ENCODE measurements at regions of chr6 and their contacts with region 1.

Region 1: GRCh38 chr6:52664186-52664990 is 6.5 kb upstream of the TMEM14A start:
- DNase-seq: peak; percentile 58
- ATAC-seq: peak; percentile 91
- H3K4me3 Mint-ChIP-seq: no peak overlapping the region
- H3K27ac Mint-ChIP-seq: no peak overlapping the region
- H3K4me1 Mint-ChIP-seq: peaks cover 19% of the 10 kb centered on the region
- H3K27me3 Mint-ChIP-seq: no peaks in the 10 kb centered on the region
- CTCF ChIP-seq: no peak

Region 2: DNA sequence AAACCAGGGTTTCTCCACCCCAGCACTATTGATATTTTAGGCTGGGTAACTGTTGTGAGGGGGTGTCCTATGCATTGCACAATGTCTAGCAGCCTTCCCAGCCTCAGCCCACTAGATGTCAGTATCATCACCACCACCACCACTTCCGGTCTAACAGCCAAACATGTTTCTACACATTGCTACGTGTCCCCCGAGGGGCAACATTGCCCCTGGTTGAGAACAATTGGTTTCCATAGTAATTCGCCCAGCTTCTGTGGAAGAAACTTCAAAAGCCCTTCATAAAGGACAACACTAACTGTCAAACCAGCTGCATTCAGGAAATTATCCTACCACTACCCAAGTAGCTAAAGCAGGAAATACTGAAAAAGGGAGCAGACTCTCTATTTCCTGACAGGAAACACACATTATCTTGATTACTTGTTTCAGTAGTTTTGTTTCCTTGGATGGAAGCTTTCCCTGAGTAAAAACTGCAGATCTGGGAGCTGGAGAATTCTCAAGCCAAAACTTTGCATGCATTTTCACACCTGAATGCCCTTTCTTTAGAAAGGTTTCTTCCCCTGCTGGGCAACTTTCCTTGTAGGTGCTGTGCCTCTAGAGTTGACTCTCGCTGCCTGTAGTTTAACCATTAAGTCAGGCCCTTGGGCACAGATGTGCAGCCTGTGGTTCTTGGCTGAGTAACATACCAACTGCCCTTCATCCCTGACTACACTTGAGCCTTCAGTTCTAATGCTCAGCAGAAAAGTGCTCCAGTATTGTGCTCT is 600.6 kb before region 1 on chr6:
- CTCF ChIA-PET with region 1: no interaction called
- POLR2A ChIA-PET with region 1: no interaction called
- intact Hi-C with region 1: loop called (anchors 1 kb)
- DNase-seq: peak; percentile 18
- ATAC-seq: peak; percentile 99
- H3K4me3 Mint-ChIP-seq: peak overlapping the region; percentile 77
- H3K27ac Mint-ChIP-seq: peak overlapping the region; percentile 25
- H3K4me1 Mint-ChIP-seq: peaks cover 7% of the 10 kb centered on the region
- H3K27me3 Mint-ChIP-seq: no peaks in the 10 kb centered on the region
- CTCF ChIP-seq: no peak

Region 3: GRCh38 chr6:52284460-52285176 is 379.8 kb before region 1 on chr6 and contains the start of gene MCM3:
- CTCF ChIA-PET with region 1: interaction called, 6 read pairs
- POLR2A ChIA-PET with region 1: no interaction called
- intact Hi-C with region 1: loop called (anchors 1 kb)
- DNase-seq: peak; percentile 83
- ATAC-seq: peak; percentile 98
- H3K4me3 Mint-ChIP-seq: peak within 1 kb of the TSS; percentile 58
- H3K27ac Mint-ChIP-seq: no peak within 1 kb of the TSS
- H3K4me1 Mint-ChIP-seq: peaks cover 20% of the 10 kb centered on the region
- H3K27me3 Mint-ChIP-seq: no peaks in the 10 kb centered on the region
- CTCF ChIP-seq: no peak
- total RNA-seq, gene MCM3: 73.2 and 78.9 TPM in 2 replicates

Region 4: GRCh38 chr6:52419809-52420670 is 244.3 kb before region 1 on chr6 and contains the start of gene EFHC1:
- CTCF ChIA-PET with region 1: interaction called, 66 read pairs
- POLR2A ChIA-PET with region 1: no interaction called
- intact Hi-C with region 1: loop called (anchors 1 kb)
- DNase-seq: peak; percentile 97
- ATAC-seq: peak; percentile 90
- H3K4me3 Mint-ChIP-seq: no peak within 1 kb of the TSS
- H3K27ac Mint-ChIP-seq: no peak within 1 kb of the TSS
- H3K4me1 Mint-ChIP-seq: peaks cover 16% of the 10 kb centered on the region
- H3K27me3 Mint-ChIP-seq: no peaks in the 10 kb centered on the region
- CTCF ChIP-seq: no peak
- total RNA-seq, gene EFHC1: 15.8 and 23.2 TPM in 2 replicates

Region 5: DNA sequence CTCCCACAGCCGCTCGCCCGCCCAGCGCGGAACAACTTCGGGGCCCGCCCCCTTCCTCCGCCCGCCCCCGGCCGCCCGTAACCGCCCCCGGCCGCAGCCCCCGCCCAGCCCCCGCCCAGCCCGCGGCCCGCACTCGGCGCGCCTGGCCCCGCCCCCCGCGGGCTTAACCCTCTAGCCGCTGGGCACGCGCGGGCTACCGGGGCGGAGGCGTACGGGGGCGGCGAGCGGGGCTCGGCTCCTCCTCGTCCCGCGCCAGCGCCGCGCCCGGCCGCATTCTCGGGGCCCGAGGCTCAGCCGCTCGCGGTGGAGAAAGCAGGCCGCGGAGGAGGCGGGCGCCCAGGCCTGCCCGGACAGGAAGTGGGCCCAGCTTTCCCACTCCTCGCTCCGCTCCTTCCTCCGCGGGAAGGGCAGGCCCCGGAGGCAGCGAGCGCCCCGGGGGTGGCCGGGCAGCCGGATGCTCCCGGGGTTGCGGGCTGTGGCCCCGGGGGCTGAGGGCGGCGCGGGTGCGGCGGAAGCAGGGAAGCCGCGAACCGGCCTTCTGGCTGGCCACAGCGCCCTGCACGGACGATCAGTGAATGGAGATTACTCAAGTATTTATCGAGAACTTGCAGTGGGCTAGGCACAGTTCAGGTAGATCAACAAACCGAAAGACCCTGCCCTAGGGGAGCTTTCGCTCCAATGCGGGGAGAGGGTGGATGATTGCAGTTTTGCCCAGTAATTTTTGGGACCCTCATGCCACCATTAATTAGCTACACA is 87.2 kb before region 1 on chr6 and contains the start of gene TRAM2:
- CTCF ChIA-PET with region 1: no interaction called
- POLR2A ChIA-PET with region 1: no interaction called
- intact Hi-C with region 1: loop called (anchors 1 kb)
- DNase-seq: peak; percentile 88
- ATAC-seq: peak; percentile 85
- H3K4me3 Mint-ChIP-seq: peak within 1 kb of the TSS; percentile 87
- H3K27ac Mint-ChIP-seq: peak within 1 kb of the TSS; percentile 83
- H3K4me1 Mint-ChIP-seq: peaks cover 46% of the 10 kb centered on the region
- H3K27me3 Mint-ChIP-seq: no peaks in the 10 kb centered on the region
- CTCF ChIP-seq: no peak
- total RNA-seq, gene TRAM2: 9.1 and 9.9 TPM in 2 replicates

Region 6: DNA sequence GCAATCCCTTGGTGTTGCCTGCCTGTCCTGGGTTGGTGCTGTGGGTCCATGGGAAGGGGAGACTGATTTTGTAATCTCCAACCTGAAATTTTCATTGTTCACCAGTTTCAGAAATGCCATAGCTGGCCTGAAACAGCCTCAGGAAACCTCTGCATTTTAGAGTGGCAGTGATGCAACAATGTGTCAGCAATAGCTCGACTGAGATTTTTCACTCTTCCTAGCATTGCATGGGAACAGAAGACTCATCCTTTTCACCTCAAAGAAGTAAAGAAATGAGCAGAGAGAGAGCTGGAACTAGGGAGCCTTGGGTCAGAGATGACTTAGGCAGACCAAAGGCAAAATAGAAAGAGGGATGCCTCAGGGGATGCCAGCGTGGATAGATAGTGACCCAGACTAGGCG is 17.2 kb before region 1 on chr6:
- CTCF ChIA-PET with region 1: interaction called, 55 read pairs
- POLR2A ChIA-PET with region 1: no interaction called
- intact Hi-C with region 1: loop called (anchors 1 kb)
- DNase-seq: no peak
- ATAC-seq: no peak
- H3K4me3 Mint-ChIP-seq: no peak overlapping the region
- H3K27ac Mint-ChIP-seq: no peak overlapping the region
- H3K4me1 Mint-ChIP-seq: peaks cover 6% of the 10 kb centered on the region
- H3K27me3 Mint-ChIP-seq: peaks cover 15% of the 10 kb centered on the region
- CTCF ChIP-seq: no peak

Region 7: GRCh38 chr6:53794720-53795253 is 1130.4 kb after region 1 on chr6 and contains the start of gene LRRC1:
- CTCF ChIA-PET with region 1: no interaction called
- POLR2A ChIA-PET with region 1: no interaction called
- intact Hi-C with region 1: loop called (anchors 10 kb)
- DNase-seq: peak; percentile 94
- ATAC-seq: peak; percentile 76
- H3K4me3 Mint-ChIP-seq: peak within 1 kb of the TSS; percentile 99
- H3K27ac Mint-ChIP-seq: peak within 1 kb of the TSS; percentile 91
- H3K4me1 Mint-ChIP-seq: peaks cover 27% of the 10 kb centered on the region
- H3K27me3 Mint-ChIP-seq: peaks cover 2% of the 10 kb centered on the region
- CTCF ChIP-seq: no peak
- total RNA-seq, gene LRRC1: 3.0 and 4.7 TPM in 2 replicates

Region 8: DNA sequence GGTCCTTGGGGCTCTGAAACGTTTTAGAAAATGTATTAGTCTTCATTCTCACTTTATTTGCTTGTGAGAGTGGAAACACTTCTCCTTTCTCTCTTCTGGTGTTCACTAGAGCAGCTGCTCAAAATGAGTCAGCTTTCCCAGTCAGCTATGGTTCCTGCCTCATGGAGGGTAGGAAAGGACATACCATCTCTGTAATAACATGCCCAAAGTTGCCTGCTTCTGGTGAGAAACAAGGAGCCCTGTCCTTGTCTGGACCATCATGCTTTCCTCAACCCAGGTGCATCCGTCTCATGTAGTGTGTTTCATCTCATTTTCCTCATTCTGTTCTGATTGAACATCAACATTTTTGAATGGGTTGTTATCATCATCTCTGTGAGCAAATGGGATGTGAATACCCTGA is 1626.8 kb after region 1 on chr6:
- CTCF ChIA-PET with region 1: no interaction called
- POLR2A ChIA-PET with region 1: no interaction called
- intact Hi-C with region 1: no loop called
- DNase-seq: no peak
- ATAC-seq: peak; percentile 54
- H3K4me3 Mint-ChIP-seq: peak overlapping the region; percentile 25
- H3K27ac Mint-ChIP-seq: peak overlapping the region; percentile 64
- H3K4me1 Mint-ChIP-seq: peaks cover 18% of the 10 kb centered on the region
- H3K27me3 Mint-ChIP-seq: no peaks in the 10 kb centered on the region
- CTCF ChIP-seq: no peak